MCF 10A (cell line): ENCODE measurements at regions of chr5 and their contacts with region 1.

Region 1: DNA sequence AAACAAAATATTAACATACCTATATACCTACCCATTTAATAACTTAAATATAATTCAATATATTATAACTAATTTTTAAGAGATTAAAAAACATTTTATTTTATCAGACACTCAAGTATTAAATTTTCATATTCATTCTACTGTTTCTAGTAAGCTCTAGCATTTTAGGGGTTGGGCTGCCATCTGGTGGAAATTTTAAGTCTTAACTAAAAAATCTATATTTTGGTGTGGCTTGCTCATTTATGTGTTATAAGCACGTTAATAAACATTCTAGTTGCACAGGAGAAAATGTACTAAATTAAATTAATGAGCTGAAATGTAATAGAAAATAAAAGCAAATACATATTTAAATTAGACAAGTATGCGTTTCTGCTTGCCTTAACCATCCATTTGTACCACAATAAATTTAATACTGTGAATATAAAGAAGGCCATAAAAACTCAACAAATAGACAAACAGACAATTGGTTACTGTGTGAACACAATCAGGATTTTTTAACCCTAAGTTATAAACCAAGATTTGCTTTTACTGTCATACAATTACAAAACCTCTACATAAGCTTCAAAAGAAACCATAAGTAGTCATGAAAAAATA is 1728.3 kb upstream of the CDH9 start:
- DNase-seq: peak; percentile 69
- H3K4me3 Mint-ChIP-seq: no peak overlapping the region
- H3K27ac Mint-ChIP-seq: no peak overlapping the region
- H3K4me1 Mint-ChIP-seq: peaks cover 9% of the 10 kb centered on the region
- H3K27me3 Mint-ChIP-seq: no peaks in the 10 kb centered on the region
- CTCF ChIP-seq: peak; percentile 59

Region 2: GRCh38 chr5:27020973-27021372 is 1745.7 kb before region 1 on chr5:
- CTCF ChIA-PET with region 1: no interaction called
- POLR2A ChIA-PET with region 1: no interaction called
- intact Hi-C with region 1: loop called (anchors 2 kb)
- DNase-seq: peak; percentile 48
- H3K4me3 Mint-ChIP-seq: no peak overlapping the region
- H3K27ac Mint-ChIP-seq: no peak overlapping the region
- H3K4me1 Mint-ChIP-seq: no peaks in the 10 kb centered on the region
- H3K27me3 Mint-ChIP-seq: no peaks in the 10 kb centered on the region
- CTCF ChIP-seq: peak; percentile 51

Region 3: GRCh38 chr5:27494887-27495286 is 1271.8 kb before region 1 on chr5:
- CTCF ChIA-PET with region 1: no interaction called
- POLR2A ChIA-PET with region 1: no interaction called
- intact Hi-C with region 1: loop called (anchors 10 kb)
- DNase-seq: peak; percentile 63
- H3K4me3 Mint-ChIP-seq: no peak overlapping the region
- H3K27ac Mint-ChIP-seq: peak overlapping the region; percentile 67
- H3K4me1 Mint-ChIP-seq: peaks cover 18% of the 10 kb centered on the region
- H3K27me3 Mint-ChIP-seq: no peaks in the 10 kb centered on the region
- CTCF ChIP-seq: no peak

Region 4: GRCh38 chr5:27938989-27939388 is 827.7 kb before region 1 on chr5:
- CTCF ChIA-PET with region 1: no interaction called
- POLR2A ChIA-PET with region 1: no interaction called
- intact Hi-C with region 1: loop called (anchors 10 kb)
- DNase-seq: no peak
- H3K4me3 Mint-ChIP-seq: no peak overlapping the region
- H3K27ac Mint-ChIP-seq: no peak overlapping the region
- H3K4me1 Mint-ChIP-seq: no peaks in the 10 kb centered on the region
- H3K27me3 Mint-ChIP-seq: no peaks in the 10 kb centered on the region
- CTCF ChIP-seq: no peak

Region 5: GRCh38 chr5:28344803-28345433 is 421.7 kb before region 1 on chr5:
- CTCF ChIA-PET with region 1: interaction called, 6 read pairs
- POLR2A ChIA-PET with region 1: interaction called, 3 read pairs
- intact Hi-C with region 1: loop called (anchors 1 kb)
- DNase-seq: peak; percentile 60
- H3K4me3 Mint-ChIP-seq: no peak overlapping the region
- H3K27ac Mint-ChIP-seq: no peak overlapping the region
- H3K4me1 Mint-ChIP-seq: no peaks in the 10 kb centered on the region
- H3K27me3 Mint-ChIP-seq: no peaks in the 10 kb centered on the region
- CTCF ChIP-seq: peak; percentile 64

Region 6: GRCh38 chr5:28473531-28474107 is 293.0 kb before region 1 on chr5:
- CTCF ChIA-PET with region 1: interaction called, 50 read pairs
- POLR2A ChIA-PET with region 1: interaction called, 3 read pairs
- intact Hi-C with region 1: loop called (anchors 1 kb)
- DNase-seq: peak; percentile 34
- H3K4me3 Mint-ChIP-seq: no peak overlapping the region
- H3K27ac Mint-ChIP-seq: no peak overlapping the region
- H3K4me1 Mint-ChIP-seq: no peaks in the 10 kb centered on the region
- H3K27me3 Mint-ChIP-seq: no peaks in the 10 kb centered on the region
- CTCF ChIP-seq: no peak